ENCODE measurements at regions of chr2 and their contacts with region 1.

Region 1: DNA sequence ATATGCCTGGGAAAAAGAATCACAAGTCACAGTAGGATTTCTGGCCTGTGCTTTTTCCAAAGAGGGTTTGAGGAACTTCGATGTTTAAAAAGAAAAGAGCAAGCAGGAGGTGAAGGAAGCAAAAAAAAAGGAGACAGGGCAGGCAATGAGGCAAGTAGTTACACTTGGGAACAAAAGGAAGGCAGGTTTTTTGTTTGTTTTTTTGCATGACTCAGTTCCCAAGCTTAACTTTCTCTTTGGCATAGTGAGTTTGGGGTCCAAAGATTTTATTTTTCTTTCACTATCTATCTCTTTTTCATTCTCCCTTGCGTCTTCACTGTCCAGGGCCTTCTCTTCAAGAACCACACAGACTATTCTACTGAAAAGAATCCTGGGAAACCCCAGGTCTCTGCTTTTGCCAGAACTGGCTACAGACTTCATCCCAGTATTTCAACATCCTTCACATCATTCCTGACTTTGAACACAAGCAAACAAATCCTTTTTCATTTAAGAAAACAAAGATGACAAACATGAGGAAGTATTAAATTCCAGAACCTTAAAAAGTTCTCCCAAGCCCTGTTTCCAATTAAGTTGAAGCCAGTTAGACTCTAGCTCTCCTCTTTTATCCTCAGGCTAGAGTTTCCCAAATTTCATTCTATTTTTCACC is 210.7 kb upstream of the RND3 start:
- DNase-seq: no peak
- ATAC-seq: no peak

Region 2: GRCh38 chr2:150567771-150568301 is 130.3 kb before region 1 on chr2:
- intact Hi-C with region 1: loop called in 1 of 2 experiments (anchors 10 kb)
- DNase-seq: no peak
- ATAC-seq: no peak

Measured in left colon (tissue), 2 donors.